Mammary epithelial cell (primary cell): ENCODE measurements at regions of chrX and their contacts with region 1.

Region 1: GRCh38 chrX:132631579-132632232 is 142.9 kb upstream of the MBNL3 start:
- DNase-seq: peak; percentile 14
- H3K4me3 ChIP-seq: no peak overlapping the region
- H3K27ac ChIP-seq: no peak overlapping the region
- H3K4me1 ChIP-seq: no peaks in the 10 kb centered on the region
- H3K27me3 ChIP-seq: no peaks in the 10 kb centered on the region
- CTCF ChIP-seq: peak; percentile 57 to 69

Region 2: GRCh38 chrX:131830400-131831184 is 801.1 kb before region 1 on chrX:
- CTCF ChIA-PET with region 1: no interaction called
- dilution Hi-C with region 1: no loop called
- in situ Hi-C with region 1: loop called in 1 of 2 experiments (anchors 25 kb)
- intact Hi-C with region 1: no loop called
- DNase-seq: peak; percentile 40
- H3K4me3 ChIP-seq: no peak overlapping the region
- H3K27ac ChIP-seq: no peak overlapping the region
- H3K4me1 ChIP-seq: no peaks in the 10 kb centered on the region
- H3K27me3 ChIP-seq: no peaks in the 10 kb centered on the region
- CTCF ChIP-seq: peak in 1 of 2 donors; percentile 30

Region 3: GRCh38 chrX:132092439-132093065 is 539.2 kb before region 1 on chrX:
- CTCF ChIA-PET with region 1: no interaction called
- dilution Hi-C with region 1: no loop called
- in situ Hi-C with region 1: no loop called
- intact Hi-C with region 1: loop called (anchors 2 kb)
- DNase-seq: peak; percentile 54
- H3K4me3 ChIP-seq: no peak overlapping the region
- H3K27ac ChIP-seq: no peak overlapping the region
- H3K4me1 ChIP-seq: no peaks in the 10 kb centered on the region
- H3K27me3 ChIP-seq: peaks cover 1% of the 10 kb centered on the region
- CTCF ChIP-seq: peak; percentile 89 to 90

Region 4: DNA sequence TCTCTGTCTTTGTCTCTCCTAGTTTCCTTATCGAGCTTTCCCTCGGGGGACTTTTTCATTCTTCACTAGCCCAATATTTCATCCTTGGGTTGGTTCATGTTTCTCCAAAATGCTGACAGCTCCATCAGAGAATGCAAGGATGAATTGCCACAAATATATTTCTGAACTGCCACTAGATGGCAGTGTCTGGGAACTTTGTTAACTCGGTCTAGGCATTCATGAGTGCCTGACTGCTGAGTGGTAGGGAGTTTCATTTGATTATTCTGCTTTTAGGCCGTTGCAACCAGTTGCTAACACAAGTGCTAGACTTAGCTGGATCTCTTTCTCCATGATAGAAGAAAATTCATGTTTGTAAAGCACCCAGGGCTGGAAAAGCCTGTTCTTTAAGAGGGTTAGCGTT is 338.9 kb before region 1 on chrX:
- CTCF ChIA-PET with region 1: interaction called, 8 read pairs
- dilution Hi-C with region 1: no loop called
- in situ Hi-C with region 1: no loop called
- intact Hi-C with region 1: loop called (anchors 1 kb)
- DNase-seq: peak; percentile 49
- H3K4me3 ChIP-seq: no peak overlapping the region
- H3K27ac ChIP-seq: no peak overlapping the region
- H3K4me1 ChIP-seq: no peaks in the 10 kb centered on the region
- H3K27me3 ChIP-seq: no peaks in the 10 kb centered on the region
- CTCF ChIP-seq: peak; percentile 52 to 75

Region 5: DNA sequence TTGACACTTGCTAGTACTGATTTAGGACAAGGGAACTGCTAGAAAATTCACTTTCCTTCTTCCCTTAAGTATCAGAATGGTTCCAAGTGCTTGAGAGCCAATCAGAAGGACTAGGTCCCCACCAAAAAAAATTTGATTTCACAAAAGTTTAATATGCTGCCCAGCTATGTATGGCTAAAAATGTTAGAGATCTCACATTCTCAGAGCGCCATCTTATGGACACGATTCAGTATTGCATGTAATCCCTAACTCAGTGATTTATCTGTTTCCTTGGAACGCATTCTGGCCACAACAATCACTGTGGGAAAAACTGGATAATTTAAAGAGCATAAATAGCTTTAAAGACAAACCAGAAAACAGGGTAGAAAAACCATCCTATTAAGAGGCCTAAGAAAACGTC is 1038.7 kb after region 1 on chrX:
- CTCF ChIA-PET with region 1: interaction called, 6 read pairs
- dilution Hi-C with region 1: no loop called
- in situ Hi-C with region 1: no loop called
- intact Hi-C with region 1: loop called (anchors 5 kb)
- DNase-seq: peak; percentile 37
- H3K4me3 ChIP-seq: no peak overlapping the region
- H3K27ac ChIP-seq: no peak overlapping the region
- H3K4me1 ChIP-seq: peaks cover 6% of the 10 kb centered on the region
- H3K27me3 ChIP-seq: no peaks in the 10 kb centered on the region
- CTCF ChIP-seq: peak; percentile 80